RWPE1 (cell line): ENCODE measurements at regions of chr3 and their contacts with region 1.

Region 1: DNA sequence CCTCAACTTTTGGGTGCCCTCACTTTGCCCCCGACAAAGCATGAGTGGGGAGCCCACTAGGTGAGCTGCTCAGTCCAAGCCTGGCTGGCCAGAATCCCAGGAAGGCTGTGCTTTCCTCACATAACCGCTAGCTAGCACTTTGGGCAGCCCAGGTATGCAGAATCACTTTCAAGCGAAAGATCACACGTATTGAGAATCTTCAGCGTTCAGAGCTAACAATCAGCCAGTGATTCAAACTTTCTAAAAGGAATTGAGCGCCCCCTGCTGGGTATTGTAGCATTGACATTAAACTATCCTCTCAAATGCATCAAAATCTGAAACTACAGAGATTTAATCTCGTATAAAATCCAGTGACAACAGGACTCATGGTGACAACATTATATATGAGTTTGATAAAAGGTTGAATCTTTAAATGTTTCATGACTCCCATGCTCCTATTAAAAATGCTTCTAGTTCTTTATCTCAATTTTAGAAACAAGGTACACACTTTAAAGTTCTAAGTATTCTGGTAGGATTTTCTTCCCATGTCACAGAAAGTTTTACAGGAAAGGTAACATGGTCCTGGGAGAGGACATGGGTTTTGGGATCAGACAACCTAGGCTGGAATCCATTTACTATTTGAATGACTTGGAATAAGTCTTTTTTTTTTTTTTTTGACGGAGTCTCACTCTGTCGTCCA is 11.8 kb downstream of the ANAPC13 start:
- DNase-seq: peak; percentile 58
- H3K27ac ChIP-seq: peak overlapping the region; percentile 57
- CTCF ChIP-seq: peak; percentile 78

Region 2: DNA sequence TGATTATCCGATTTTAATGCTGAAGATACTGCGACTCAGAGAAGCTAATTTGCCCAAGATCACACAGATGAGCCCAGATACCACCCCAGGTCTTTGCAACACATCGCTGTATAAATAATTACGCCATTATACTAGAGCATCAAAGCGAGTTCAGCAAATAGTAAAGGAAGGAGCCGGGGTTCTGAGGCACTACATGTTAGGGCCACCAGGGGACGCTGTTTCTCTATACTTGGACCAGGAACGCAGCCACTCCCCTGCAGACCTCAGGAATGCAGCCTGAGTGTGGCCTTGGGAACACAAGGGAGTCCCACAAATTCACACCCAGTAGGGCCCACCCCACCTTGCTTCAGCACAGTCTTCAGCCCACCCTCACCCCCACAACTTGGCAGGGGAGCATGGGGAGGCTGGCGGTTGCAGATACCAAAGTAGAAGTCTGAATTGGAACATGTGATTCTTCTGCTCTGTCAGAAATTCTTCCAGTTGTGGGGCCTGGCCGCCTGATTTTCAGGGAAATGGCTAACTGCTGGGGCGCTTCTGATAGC is 165.6 kb before region 1 on chr3:
- CTCF ChIA-PET with region 1: interaction called, 25 read pairs
- POLR2A ChIA-PET with region 1: no interaction called
- DNase-seq: peak; percentile 71
- H3K27ac ChIP-seq: peak overlapping the region; percentile 78
- CTCF ChIP-seq: peak; percentile 98

Region 3: GRCh38 chr3:134364061-134364935 is 109.7 kb before region 1 on chr3:
- CTCF ChIA-PET with region 1: interaction called, 11 read pairs
- POLR2A ChIA-PET with region 1: no interaction called
- DNase-seq: peak; percentile 97
- H3K27ac ChIP-seq: peak overlapping the region; percentile 97
- CTCF ChIP-seq: no peak

Region 4: GRCh38 chr3:134373994-134374790 is 99.8 kb before region 1 on chr3 and contains the start of gene AMOTL2:
- CTCF ChIA-PET with region 1: interaction called, 18 read pairs
- POLR2A ChIA-PET with region 1: interaction called, 5 read pairs
- DNase-seq: peak; percentile 98
- H3K27ac ChIP-seq: peak within 1 kb of the TSS; percentile 97
- CTCF ChIP-seq: no peak